Panc1 (cell line): ENCODE measurements at regions of chr16 and their contacts with region 1.

Region 1: DNA sequence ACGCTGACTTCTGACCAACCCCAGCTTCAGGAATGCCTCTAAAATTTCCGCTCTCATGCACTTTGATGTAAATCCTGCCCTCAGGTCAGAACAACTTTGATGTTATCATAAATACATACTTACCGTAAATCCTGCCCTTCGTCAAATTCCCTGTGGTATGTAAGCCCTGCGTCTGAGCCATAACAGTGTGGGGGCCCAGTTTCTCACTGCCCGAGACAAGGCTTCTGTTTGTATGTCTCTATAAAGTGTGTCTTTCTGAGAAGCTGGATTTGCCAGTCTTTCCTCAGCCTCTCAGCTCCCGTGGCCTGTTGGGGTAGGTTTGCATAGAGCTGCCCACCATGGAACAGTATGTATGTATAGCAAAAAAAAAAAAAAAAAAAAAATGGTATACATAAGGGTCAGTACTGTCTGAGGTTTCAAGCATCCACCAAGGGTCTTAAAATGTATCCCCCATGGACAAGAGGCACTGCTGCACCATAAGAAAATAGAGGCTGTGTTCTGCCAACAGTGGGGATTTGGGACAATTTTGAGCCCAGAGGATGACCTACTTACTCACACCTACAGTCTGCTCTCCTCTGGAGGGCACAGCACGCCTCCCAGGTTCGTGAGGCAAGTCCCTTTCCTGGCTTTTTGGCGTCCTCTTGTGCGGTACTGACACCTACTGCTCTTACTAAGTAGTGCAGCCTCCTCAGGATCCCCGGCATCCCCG is 17.5 kb downstream of the PRMT7 start:
- DNase-seq: peak; percentile 56
- ATAC-seq: peak; percentile 97
- H3K4me3 ChIP-seq: no peak overlapping the region
- H3K27ac ChIP-seq: no peak overlapping the region
- H3K4me1 ChIP-seq: peaks cover 13% of the 10 kb centered on the region
- H3K27me3 ChIP-seq: no peaks in the 10 kb centered on the region
- CTCF ChIP-seq: peak; percentile 85

Region 2: GRCh38 chr16:68244903-68245853 is 83.1 kb before region 1 on chr16 and contains the start of gene PLA2G15:
- CTCF ChIA-PET with region 1: no interaction called
- POLR2A ChIA-PET with region 1: no interaction called
- in situ Hi-C with region 1: no loop called
- intact Hi-C with region 1: loop called (anchors 5 kb)
- DNase-seq: no peak
- ATAC-seq: peak; percentile 95
- H3K4me3 ChIP-seq: peak within 1 kb of the TSS; percentile 62 to 85
- H3K27ac ChIP-seq: peak within 1 kb of the TSS; percentile 72
- H3K4me1 ChIP-seq: peaks cover 9% of the 10 kb centered on the region
- H3K27me3 ChIP-seq: no peaks in the 10 kb centered on the region
- CTCF ChIP-seq: no peak
- total RNA-seq, gene PLA2G15: 14.3 TPM

Region 3: DNA sequence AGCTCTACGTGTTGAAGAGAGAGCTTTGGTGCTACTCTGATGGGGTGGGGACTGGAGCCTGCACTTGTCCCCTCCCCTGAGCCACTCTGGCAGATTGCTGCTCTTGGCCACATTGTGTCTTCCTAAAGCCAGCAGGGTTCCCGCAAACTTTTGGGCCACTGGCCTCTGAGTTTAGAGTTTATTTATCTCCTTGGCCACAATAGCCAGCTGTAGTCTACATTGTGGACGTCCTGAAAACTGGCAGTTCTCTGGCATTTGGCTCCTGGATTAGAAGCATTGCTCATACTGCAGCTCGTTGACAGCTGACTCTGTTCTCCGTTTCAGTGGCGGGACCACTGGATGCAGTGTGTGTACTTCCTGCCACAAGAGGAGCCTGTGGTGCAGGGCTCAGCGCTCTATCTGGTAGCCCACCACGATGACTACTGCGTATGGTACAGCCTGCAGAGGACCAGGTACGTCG is 17.1 kb after region 1 on chr16:
- CTCF ChIA-PET with region 1: no interaction called
- POLR2A ChIA-PET with region 1: no interaction called
- in situ Hi-C with region 1: no loop called
- intact Hi-C with region 1: no loop called
- DNase-seq: no peak
- ATAC-seq: no peak
- H3K4me3 ChIP-seq: no peak overlapping the region
- H3K27ac ChIP-seq: no peak overlapping the region
- H3K4me1 ChIP-seq: no peaks in the 10 kb centered on the region
- H3K27me3 ChIP-seq: no peaks in the 10 kb centered on the region
- CTCF ChIP-seq: no peak